ENCODE measurements at regions of chr7 and their contacts with region 1.

Region 1: DNA sequence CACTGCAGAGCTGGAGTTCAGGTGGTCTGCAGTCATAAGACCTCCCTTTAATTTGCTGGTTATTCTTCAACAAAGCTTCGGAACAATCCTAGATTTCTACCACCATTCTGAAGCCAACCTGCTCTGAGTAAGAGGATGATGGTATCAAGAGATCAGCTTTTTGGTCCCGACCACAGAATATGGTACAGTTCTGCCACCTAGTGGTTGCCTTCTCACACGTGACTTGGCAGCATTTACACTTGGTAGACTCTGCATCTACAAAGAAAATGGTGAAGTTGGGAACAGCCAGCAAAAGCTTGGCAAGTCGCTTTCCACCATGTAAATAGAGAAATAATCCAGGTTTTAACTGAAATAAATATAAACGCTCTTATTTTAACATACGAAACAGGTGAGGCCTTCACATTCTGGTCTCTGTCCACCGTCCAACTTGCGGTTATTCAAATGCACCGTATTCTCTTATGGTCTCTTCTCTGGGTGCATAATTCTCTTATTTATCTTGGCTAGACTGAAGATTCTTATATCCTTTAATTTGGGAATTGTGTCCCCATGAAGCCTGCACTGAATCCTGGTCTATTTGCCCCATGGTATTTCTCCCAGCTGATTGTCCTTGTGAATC is 173.9 kb upstream of the GRM3 start:
- DNase-seq: peak; percentile 73
- ATAC-seq: peak; percentile 97
- H3K4me3 Mint-ChIP-seq: no peak overlapping the region
- H3K27ac Mint-ChIP-seq: no peak overlapping the region
- H3K4me1 Mint-ChIP-seq: no peaks in the 10 kb centered on the region
- H3K27me3 Mint-ChIP-seq: no peaks in the 10 kb centered on the region
- CTCF ChIP-seq: peak; percentile 69

Region 2: GRCh38 chr7:85890244-85890811 is 579.5 kb before region 1 on chr7:
- CTCF ChIA-PET with region 1: interaction called, 35 read pairs
- POLR2A ChIA-PET with region 1: no interaction called
- DNase-seq: no peak
- ATAC-seq: peak; percentile 72
- H3K4me3 Mint-ChIP-seq: no peak overlapping the region
- H3K27ac Mint-ChIP-seq: no peak overlapping the region
- H3K4me1 Mint-ChIP-seq: 0 out of 2 replicates have a peak, but pooled peaks cover 11% of the 10 kb centered on the region
- H3K27me3 Mint-ChIP-seq: no peaks in the 10 kb centered on the region
- CTCF ChIP-seq: peak; percentile 61

Region 3: DNA sequence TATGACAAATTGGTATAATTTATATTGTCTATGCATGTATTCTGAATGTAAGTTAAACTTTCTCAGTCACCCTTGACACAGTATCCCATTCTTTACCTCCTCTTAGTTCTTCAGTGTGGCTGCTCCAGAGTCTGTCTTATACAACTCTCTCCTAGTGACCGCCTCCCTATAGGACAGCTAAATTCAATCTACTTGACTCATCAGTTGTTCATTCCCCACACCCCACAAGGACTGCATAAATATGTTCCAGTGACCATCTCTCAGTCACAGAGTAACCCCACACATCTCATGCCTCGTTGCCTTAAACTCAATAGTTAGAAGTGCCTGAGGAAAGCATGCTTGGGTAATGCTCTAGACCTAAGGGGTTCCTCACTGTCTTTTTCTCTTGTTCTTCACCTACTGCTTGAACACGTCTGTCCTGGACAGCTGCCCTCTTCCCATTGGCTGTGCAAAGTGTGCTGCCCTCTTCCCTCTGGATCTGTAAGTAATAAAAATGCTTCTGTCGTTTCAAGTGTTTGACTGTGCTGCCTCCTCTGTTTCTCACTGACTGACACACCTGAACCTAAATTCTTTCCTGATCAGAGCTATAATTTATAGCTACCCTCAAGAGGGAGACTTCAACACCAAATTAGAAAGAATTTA is 320.6 kb before region 1 on chr7:
- CTCF ChIA-PET with region 1: interaction called, 11 read pairs
- POLR2A ChIA-PET with region 1: no interaction called
- DNase-seq: no peak
- ATAC-seq: no peak
- H3K4me3 Mint-ChIP-seq: no peak overlapping the region
- H3K27ac Mint-ChIP-seq: no peak overlapping the region
- H3K4me1 Mint-ChIP-seq: no peaks in the 10 kb centered on the region
- H3K27me3 Mint-ChIP-seq: no peaks in the 10 kb centered on the region
- CTCF ChIP-seq: no peak

Region 4: GRCh38 chr7:86431761-86432160 is 38.0 kb before region 1 on chr7:
- CTCF ChIA-PET with region 1: no interaction called
- POLR2A ChIA-PET with region 1: no interaction called
- DNase-seq: no peak
- ATAC-seq: no peak
- H3K4me3 Mint-ChIP-seq: no peak overlapping the region
- H3K27ac Mint-ChIP-seq: no peak overlapping the region
- H3K4me1 Mint-ChIP-seq: no peaks in the 10 kb centered on the region
- H3K27me3 Mint-ChIP-seq: no peaks in the 10 kb centered on the region
- CTCF ChIP-seq: no peak

Region 5: DNA sequence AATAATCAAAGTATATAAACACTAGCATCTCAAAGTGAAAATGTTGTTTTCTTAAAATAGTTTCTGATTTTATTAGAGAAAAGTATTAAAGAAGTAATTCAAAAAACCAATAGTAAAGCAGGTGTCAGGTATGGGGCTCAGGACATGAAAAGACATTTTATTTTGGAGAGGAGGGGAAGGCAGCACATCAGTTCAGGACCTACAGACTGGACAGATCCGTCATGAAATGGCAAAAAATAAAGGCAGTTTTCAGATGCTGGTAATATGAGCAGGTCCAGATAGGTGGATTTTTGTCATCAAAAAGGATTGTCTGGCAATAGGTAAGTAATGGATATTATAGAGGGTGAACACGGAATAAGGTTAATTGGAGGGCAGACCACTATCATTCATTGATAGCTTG is 223.0 kb after region 1 on chr7:
- CTCF ChIA-PET with region 1: no interaction called
- POLR2A ChIA-PET with region 1: no interaction called
- DNase-seq: no peak
- ATAC-seq: no peak
- H3K4me3 Mint-ChIP-seq: no peak overlapping the region
- H3K27ac Mint-ChIP-seq: no peak overlapping the region
- H3K4me1 Mint-ChIP-seq: no peaks in the 10 kb centered on the region
- H3K27me3 Mint-ChIP-seq: no peaks in the 10 kb centered on the region
- CTCF ChIP-seq: no peak

Region 6: DNA sequence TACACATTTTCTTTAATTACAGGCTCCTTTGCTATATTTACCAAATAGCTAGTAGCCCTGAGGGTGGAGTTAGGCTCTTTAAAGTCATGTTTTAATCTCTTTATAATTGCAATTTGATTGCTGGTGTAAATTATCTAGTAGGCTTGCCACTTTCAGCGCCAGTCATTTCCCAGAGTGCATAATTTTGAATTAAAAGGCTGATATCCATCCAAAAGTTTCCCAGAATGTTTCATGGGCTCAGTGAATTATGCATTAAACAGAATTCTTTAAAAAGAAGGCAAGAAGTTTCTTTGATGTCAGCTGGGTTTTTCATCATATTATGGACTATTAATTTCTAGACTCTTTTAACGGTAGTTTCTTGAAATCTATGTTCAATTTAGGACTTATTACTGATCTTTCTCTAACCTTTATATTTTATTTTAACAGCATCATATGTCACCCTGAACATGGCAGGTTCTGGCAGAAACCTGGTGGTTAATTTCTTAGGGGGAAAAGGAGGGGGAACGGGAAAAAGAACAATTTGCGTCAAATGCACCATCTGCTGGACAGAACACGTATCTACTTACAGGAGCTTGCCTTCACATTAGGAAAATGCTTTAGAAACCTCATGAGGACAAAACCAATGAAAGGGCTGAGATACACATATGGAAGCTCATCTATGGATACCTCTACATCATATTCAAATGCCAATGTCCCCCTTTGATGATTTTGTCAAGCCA is 345.0 kb after region 1 on chr7:
- CTCF ChIA-PET with region 1: no interaction called
- POLR2A ChIA-PET with region 1: no interaction called
- DNase-seq: peak; percentile 22
- ATAC-seq: peak; percentile 76
- H3K4me3 Mint-ChIP-seq: no peak overlapping the region
- H3K27ac Mint-ChIP-seq: no peak overlapping the region
- H3K4me1 Mint-ChIP-seq: no peaks in the 10 kb centered on the region
- H3K27me3 Mint-ChIP-seq: no peaks in the 10 kb centered on the region
- CTCF ChIP-seq: peak; percentile 40